ENCODE measurements at regions of chr12 and their contacts with region 1.

Region 1: GRCh38 chr12:52278541-52279421 is 4.3 kb downstream of the KRT86 start:
- DNase-seq: peak; percentile 76
- H3K4me3 Mint-ChIP-seq: no peak overlapping the region
- H3K27ac Mint-ChIP-seq: no peak overlapping the region
- H3K4me1 Mint-ChIP-seq: peaks cover 9% of the 10 kb centered on the region
- H3K27me3 Mint-ChIP-seq: peaks cover 56% of the 10 kb centered on the region

Region 2: DNA sequence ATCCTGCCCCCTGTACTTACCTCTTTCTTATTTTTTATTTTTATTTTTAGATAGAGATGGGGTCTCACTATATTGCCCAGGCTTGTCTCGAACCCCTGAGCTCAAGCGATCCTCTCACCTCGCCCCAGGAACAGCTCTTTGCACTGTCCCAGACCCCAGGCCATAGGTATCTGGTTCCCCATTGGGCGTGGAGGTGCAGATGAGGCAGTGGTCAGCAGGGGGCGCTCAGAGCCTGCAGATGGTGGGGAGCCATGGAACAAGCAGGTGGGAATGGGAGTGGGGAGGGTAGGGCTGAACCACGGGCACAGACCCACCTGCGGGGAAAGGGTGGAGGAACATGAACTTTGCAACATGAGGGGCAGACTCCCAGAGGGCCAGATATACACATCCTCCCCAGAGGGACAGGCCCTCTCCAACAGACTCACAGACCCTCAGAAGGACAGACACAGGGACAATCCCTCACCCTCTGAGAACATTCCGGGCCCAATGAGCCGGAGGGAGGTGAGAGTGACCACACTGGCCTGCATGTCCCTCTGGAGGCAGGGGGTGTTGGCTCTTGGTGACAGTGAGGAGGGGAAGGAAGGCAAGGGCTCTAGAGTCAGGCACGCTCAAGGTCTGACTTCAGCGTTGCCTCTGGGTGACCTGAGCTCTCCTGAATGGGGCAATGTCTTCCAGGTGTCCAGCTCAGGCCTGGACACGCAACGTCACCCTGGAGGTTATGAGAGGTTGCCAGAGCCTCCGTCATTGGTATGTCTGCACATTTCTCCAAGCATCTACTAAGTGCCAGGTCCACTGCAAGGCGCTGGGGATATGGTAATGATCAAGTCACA is 121.8 kb before region 1 on chr12:
- CTCF ChIA-PET with region 1: interaction called, 12 read pairs
- POLR2A ChIA-PET with region 1: no interaction called
- DNase-seq: peak; percentile 80
- H3K4me3 Mint-ChIP-seq: no peak overlapping the region
- H3K27ac Mint-ChIP-seq: no peak overlapping the region
- H3K4me1 Mint-ChIP-seq: peaks cover 46% of the 10 kb centered on the region
- H3K27me3 Mint-ChIP-seq: no peaks in the 10 kb centered on the region

Region 3: GRCh38 chr12:52221912-52222457 is 56.8 kb before region 1 on chr12:
- CTCF ChIA-PET with region 1: interaction called, 80 read pairs
- POLR2A ChIA-PET with region 1: no interaction called
- DNase-seq: peak; percentile 85
- H3K4me3 Mint-ChIP-seq: no peak overlapping the region
- H3K27ac Mint-ChIP-seq: no peak overlapping the region
- H3K4me1 Mint-ChIP-seq: peaks cover 15% of the 10 kb centered on the region
- H3K27me3 Mint-ChIP-seq: peaks cover 53% of the 10 kb centered on the region

Region 4: GRCh38 chr12:52250048-52250990 is 28.5 kb before region 1 on chr12:
- CTCF ChIA-PET with region 1: interaction called, 32 read pairs
- POLR2A ChIA-PET with region 1: interaction called, 4 read pairs
- DNase-seq: no peak
- H3K4me3 Mint-ChIP-seq: no peak overlapping the region
- H3K27ac Mint-ChIP-seq: peak overlapping the region; percentile 10
- H3K4me1 Mint-ChIP-seq: peaks cover 69% of the 10 kb centered on the region
- H3K27me3 Mint-ChIP-seq: peaks cover 12% of the 10 kb centered on the region

Region 5: DNA sequence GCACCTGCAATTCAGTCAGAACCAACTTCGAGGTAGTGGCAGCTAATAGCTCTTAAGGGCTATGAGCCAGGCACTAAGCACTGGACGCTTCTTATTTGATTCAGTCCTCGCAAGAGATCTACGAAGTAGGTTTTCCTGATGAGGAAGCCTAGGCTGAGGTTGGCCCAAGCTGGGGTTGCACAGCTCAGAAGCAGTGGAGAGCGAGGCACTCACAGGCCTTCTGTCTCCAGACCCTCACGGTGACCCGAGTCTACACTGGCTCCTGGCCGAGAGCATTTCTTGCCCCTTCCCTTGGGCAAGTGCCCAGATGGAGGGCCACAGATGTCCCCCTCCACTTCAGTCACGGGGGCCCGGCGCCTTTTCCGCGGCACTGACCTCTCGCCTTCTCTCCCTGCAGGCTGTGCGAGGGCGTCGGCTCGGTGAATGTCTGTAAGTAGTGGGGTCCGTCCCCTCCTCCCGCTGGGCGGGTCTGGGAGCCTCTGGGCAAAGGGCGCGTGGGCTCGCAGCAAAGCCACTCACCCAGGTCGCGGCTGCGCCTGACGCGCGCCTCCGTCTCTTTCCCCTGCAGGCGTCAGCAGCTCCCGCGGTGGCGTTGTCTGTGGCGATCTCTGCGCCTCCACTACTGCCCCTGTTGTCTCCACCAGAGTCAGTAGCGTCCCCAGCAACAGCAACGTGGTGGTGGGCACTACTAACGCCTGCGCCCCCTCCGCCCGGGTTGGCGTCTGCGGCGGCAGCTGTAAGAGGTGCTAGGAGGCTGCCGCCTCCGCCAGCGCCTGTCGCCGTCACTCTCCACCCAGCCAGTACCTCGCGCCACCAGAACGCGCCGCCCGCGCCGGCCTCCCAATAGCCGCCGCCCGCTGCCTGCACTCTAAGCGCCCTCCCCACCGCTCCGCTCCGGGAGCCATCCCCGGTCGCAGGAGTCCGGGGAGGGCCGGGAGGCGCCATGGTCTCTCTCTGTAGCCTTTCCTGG is 29.3 kb after region 1 on chr12:
- CTCF ChIA-PET with region 1: interaction called, 50 read pairs
- POLR2A ChIA-PET with region 1: no interaction called
- DNase-seq: peak; percentile 49
- H3K4me3 Mint-ChIP-seq: peak overlapping the region; percentile 52
- H3K27ac Mint-ChIP-seq: no peak overlapping the region
- H3K4me1 Mint-ChIP-seq: peaks cover 24% of the 10 kb centered on the region
- H3K27me3 Mint-ChIP-seq: peaks cover 60% of the 10 kb centered on the region

Region 6: DNA sequence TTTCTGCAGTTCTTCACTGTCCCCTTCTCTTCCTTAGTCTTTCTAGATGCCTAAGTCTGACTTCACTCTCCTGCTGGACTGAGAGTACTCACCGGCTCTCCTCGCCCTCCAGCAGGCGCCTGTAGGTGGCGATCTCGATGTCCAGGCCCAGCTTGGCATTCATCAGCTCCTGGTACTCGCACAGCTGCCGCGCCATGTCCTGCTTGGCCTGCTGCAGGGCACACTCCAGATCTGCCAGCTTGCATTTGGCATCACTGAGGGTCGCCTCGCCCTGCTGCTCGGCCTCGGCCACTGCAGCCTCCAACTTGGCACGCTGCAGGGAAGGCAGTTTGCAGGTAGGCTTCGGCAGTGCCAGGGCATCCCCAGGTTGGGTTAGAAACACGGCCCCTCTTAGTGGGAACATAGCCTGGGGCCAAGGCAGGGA is 101.5 kb after region 1 on chr12:
- CTCF ChIA-PET with region 1: no interaction called
- POLR2A ChIA-PET with region 1: no interaction called
- DNase-seq: peak; percentile 24
- H3K4me3 Mint-ChIP-seq: no peak overlapping the region
- H3K27ac Mint-ChIP-seq: no peak overlapping the region
- H3K4me1 Mint-ChIP-seq: peaks cover 8% of the 10 kb centered on the region
- H3K27me3 Mint-ChIP-seq: peaks cover 9% of the 10 kb centered on the region

Measured in activated CD4-positive, alpha-beta memory T cell treated with anti-CD3 and anti-CD28 coated beads, Interleukin-2, amount 10 ng/mL, durations not matched to agents 7 days and 5 days (primary cell).